Colonic mucosa (tissue), 4 donors: ENCODE measurements at regions of chr15 and their contacts with region 1.

Region 1: DNA sequence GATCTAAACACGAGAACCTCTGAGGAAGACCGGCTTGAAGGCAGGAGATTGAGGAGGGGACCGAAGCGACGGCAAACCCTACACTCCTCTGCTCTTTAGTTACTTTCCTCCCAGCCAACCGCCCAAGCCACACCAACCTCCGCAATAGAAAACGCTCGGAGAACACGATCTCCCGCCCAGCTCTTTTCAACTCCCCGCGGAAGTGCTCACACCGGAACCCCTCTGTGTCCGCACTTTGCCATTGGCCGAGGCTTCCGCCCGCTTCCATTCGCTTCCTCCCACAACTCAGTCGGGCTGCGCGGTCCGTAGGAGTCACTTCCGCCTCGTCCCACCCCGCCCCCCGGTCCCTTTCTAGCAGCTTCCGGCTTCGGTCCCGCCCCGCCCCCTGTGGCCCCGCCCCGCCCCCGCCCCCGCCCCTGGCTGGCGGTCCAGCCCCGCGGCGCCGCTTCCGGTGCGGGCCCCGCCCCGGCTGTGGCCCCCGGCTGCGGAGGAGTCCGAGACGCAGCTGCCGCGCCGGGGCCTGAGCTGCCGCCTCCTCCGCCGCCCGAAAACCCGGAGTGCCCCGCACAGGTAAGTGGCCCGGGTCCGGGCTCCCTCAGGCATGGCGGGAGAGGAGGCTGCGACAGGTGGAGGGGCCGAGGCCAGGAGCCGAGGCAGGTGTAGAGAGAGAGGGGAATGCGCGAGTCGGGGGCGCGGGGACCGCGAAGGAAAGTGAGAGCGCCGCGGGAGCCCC is at the start of gene ARID3B:
- DNase-seq: peak; percentile 98
- H3K4me3 ChIP-seq: peak within 1 kb of the TSS; percentile 94
- H3K27ac ChIP-seq: peak within 1 kb of the TSS; percentile 75
- H3K4me1 ChIP-seq: peaks cover 16% of the 10 kb centered on the region
- H3K27me3 ChIP-seq: no peaks in the 10 kb centered on the region
- CTCF ChIP-seq: no peak
- total RNA-seq, gene ARID3B: 8.8 to 9.5 TPM

Region 2: GRCh38 chr15:74460871-74461846 is 79.8 kb before region 1 on chr15 and contains the start of gene UBL7:
- intact Hi-C with region 1: loop called (anchors 10 kb)
- DNase-seq: peak; percentile 99
- H3K4me3 ChIP-seq: peak within 1 kb of the TSS; percentile 60
- H3K27ac ChIP-seq: peak within 1 kb of the TSS; percentile 43
- H3K4me1 ChIP-seq: no peaks in the 10 kb centered on the region
- H3K27me3 ChIP-seq: no peaks in the 10 kb centered on the region
- CTCF ChIP-seq: no peak
- total RNA-seq, gene UBL7: 32.2 to 43.8 TPM

Region 3: DNA sequence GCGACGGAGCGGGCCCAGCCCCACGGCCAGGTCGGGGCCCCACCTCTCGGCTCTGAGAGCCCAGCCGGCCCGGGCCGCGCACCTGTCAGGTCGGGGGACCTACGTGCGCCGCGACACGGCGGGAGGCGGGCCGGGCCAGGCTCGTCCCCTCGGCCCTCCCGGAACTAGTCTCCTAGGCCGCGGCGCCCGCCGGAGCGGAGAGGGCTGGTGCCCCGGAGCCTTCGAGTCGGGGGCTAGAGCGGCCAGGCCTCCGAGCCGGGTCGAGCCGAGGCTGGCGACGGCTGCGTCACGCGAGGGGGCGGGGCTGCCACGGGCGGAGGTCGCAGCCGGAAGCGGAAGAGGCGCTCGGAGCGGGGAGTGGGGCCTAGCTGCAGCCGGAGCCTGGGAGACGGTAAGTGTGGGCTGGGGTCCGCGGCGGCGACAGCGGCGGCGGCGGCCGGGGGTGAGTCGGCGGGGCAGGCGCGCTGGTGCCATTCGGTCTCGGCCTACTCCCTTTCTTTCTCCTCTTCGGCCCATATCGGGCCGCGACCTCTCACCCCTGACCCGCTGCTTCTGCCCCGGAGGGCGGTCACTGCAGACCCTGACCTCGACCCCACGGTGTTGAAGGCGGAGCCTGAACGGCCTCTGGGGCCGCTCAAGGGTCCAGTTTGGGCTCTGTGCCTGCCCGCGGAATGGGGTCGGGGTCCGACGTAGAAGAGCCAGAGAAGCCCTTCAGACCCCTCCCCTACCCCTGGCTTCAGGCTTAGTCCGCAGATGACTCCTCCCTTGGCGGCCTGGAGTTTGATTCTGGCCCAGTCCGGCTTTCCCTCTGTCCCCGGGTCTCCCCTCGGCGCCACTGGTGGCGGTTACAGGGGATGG is 74.8 kb after region 1 on chr15 and contains the start of gene CLK3:
- intact Hi-C with region 1: loop called (anchors 5 kb)
- DNase-seq: peak; percentile 97
- H3K4me3 ChIP-seq: peak within 1 kb of the TSS; percentile 99
- H3K27ac ChIP-seq: peak within 1 kb of the TSS; percentile 97
- H3K4me1 ChIP-seq: peaks cover 20% of the 10 kb centered on the region
- H3K27me3 ChIP-seq: no peaks in the 10 kb centered on the region
- CTCF ChIP-seq: no peak
- total RNA-seq, gene CLK3: 83.5 to 88.9 TPM